ENCODE measurements at regions of chr15 and their contacts with region 1.

Region 1: DNA sequence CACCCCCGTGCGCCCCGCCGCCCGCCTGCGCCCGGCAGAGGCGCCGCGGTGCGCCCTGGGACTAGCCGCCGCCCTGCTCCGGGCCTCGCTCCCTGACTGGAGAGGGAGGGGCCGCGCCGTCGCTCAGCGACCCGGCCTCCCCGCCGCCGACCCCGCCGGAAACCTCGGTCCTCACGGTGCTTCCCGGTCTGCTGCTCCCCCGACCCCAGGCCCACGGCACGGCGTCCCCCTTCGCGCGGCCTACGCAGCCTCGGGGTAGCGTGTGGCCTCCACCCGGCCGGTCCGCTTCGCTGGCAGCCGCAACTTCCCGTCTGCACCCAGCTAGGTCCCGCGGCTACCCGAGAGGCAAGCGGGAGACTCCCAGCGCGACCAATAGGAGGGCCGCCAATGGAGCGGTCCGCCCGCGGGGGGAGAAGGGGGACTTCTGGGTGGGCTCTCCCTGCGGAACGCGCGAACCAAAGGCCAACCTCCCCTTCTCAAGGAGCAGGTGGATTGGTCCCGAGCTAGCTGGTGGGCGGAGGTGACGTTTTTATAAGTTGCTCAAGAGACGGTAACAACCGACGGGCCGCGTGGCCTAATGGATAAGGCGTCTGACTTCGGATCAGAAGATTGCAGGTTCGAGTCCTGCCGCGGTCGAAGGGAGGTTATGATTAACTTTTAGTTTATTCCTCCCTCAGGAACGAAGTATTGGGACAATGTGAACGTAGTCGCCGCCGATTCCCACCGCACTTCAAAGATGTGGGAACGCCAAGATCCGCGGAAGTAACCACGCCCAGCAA is at the start of gene POLG:
- DNase-seq: peak; percentile 99
- H3K4me3 ChIP-seq: peak within 1 kb of the TSS; percentile 96
- H3K4me3 Mint-ChIP-seq: peak within 1 kb of the TSS; percentile 85
- H3K27ac Mint-ChIP-seq: peak within 1 kb of the TSS; percentile 98
- H3K4me1 ChIP-seq: 0 out of 2 replicates have a peak, but pooled peaks cover 3% of the 10 kb centered on the region
- H3K4me1 Mint-ChIP-seq: peaks cover 23% of the 10 kb centered on the region
- H3K27me3 ChIP-seq: no peaks in the 10 kb centered on the region
- H3K27me3 Mint-ChIP-seq: peaks cover 3% of the 10 kb centered on the region
- CTCF ChIP-seq: no peak
- total RNA-seq, gene POLG: 63.1 and 64.1 TPM in 2 replicates

Region 2: GRCh38 chr15:89167267-89168176 is 167.2 kb before region 1 on chr15:
- CTCF ChIA-PET with region 1: no interaction called
- POLR2A ChIA-PET with region 1: no interaction called
- intact Hi-C with region 1: no loop called
- DNase-seq: no peak
- H3K4me3 ChIP-seq: no peak overlapping the region
- H3K4me3 Mint-ChIP-seq: no peak overlapping the region
- H3K27ac Mint-ChIP-seq: peak overlapping the region; percentile 53
- H3K4me1 ChIP-seq: peaks cover 32% of the 10 kb centered on the region
- H3K4me1 Mint-ChIP-seq: peaks cover 17% of the 10 kb centered on the region
- H3K27me3 ChIP-seq: no peaks in the 10 kb centered on the region
- H3K27me3 Mint-ChIP-seq: no peaks in the 10 kb centered on the region
- CTCF ChIP-seq: no peak

Region 3: GRCh38 chr15:89195836-89196235 is 138.9 kb before region 1 on chr15:
- CTCF ChIA-PET with region 1: no interaction called
- POLR2A ChIA-PET with region 1: interaction called, 12 read pairs
- intact Hi-C with region 1: no loop called
- DNase-seq: no peak
- H3K4me3 ChIP-seq: no peak overlapping the region
- H3K4me3 Mint-ChIP-seq: no peak overlapping the region
- H3K27ac Mint-ChIP-seq: no peak overlapping the region
- H3K4me1 ChIP-seq: no peaks in the 10 kb centered on the region
- H3K4me1 Mint-ChIP-seq: peaks cover 5% of the 10 kb centered on the region
- H3K27me3 ChIP-seq: no peaks in the 10 kb centered on the region
- H3K27me3 Mint-ChIP-seq: no peaks in the 10 kb centered on the region
- CTCF ChIP-seq: no peak

Region 4: DNA sequence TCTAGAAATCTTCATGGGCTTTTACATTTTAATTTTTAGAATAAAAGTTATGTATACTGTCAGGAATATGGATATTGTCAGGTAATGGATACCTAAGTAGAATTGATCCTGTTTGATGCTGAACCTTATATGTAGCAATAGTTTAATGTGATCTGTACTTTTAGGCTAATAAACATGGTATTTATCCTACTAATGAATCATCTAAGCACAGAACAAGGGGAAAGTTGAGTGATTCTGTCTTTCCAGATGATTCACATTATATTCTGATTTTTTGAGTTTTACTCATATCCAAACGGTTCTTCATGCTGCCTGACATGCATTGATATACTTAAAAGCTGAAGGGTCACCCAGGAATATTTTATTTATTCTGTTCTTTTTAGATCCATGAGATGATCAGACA is 56.4 kb before region 1 on chr15:
- CTCF ChIA-PET with region 1: no interaction called
- POLR2A ChIA-PET with region 1: no interaction called
- intact Hi-C with region 1: no loop called
- DNase-seq: no peak
- H3K4me3 ChIP-seq: no peak overlapping the region
- H3K4me3 Mint-ChIP-seq: no peak overlapping the region
- H3K27ac Mint-ChIP-seq: no peak overlapping the region
- H3K4me1 ChIP-seq: no peaks in the 10 kb centered on the region
- H3K4me1 Mint-ChIP-seq: no peaks in the 10 kb centered on the region
- H3K27me3 ChIP-seq: no peaks in the 10 kb centered on the region
- H3K27me3 Mint-ChIP-seq: no peaks in the 10 kb centered on the region
- CTCF ChIP-seq: no peak

Region 5: GRCh38 chr15:89364341-89364740 is 29.6 kb after region 1 on chr15:
- CTCF ChIA-PET with region 1: no interaction called
- POLR2A ChIA-PET with region 1: no interaction called
- intact Hi-C with region 1: no loop called
- DNase-seq: no peak
- H3K4me3 ChIP-seq: no peak overlapping the region
- H3K4me3 Mint-ChIP-seq: no peak overlapping the region
- H3K27ac Mint-ChIP-seq: no peak overlapping the region
- H3K4me1 ChIP-seq: no peaks in the 10 kb centered on the region
- H3K4me1 Mint-ChIP-seq: no peaks in the 10 kb centered on the region
- H3K27me3 ChIP-seq: peaks cover 6% of the 10 kb centered on the region
- H3K27me3 Mint-ChIP-seq: peaks cover 50% of the 10 kb centered on the region
- CTCF ChIP-seq: no peak

Region 6: DNA sequence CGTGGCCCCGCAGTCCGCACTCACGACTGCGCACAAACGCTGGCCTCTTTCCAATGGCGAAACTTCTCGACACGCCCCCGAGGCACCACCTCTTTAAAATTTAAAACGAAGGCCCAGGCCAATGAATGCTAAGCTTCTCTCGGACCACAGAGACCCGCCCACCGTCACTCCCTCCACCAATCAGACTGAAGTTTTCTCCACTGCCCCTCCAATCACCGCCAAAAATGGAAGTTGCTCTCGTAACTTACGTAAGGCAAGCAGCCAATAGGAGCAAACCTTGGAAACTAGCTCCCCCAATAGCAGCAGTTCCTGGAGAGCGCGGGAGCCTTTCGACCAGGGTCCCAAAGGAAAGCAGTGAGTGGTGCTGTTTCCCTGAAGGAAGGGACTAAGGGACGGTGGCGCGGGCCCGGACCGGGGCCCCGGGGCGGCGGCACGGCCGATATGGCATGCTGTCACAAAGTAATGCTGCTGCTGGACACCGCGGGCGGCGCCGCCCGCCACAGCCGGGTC is 240.5 kb after region 1 on chr15 and contains the start of gene TICRR:
- CTCF ChIA-PET with region 1: no interaction called
- POLR2A ChIA-PET with region 1: no interaction called
- intact Hi-C with region 1: loop called (anchors 1 kb)
- DNase-seq: peak; percentile 97 to 99
- H3K4me3 ChIP-seq: peak within 1 kb of the TSS; percentile 62
- H3K4me3 Mint-ChIP-seq: peak within 1 kb of the TSS; percentile 79
- H3K27ac Mint-ChIP-seq: peak within 1 kb of the TSS; percentile 77
- H3K4me1 ChIP-seq: peaks cover 7% of the 10 kb centered on the region; the same call in 1 of the 2 replicates
- H3K4me1 Mint-ChIP-seq: peaks cover 18% of the 10 kb centered on the region
- H3K27me3 ChIP-seq: no peaks in the 10 kb centered on the region
- H3K27me3 Mint-ChIP-seq: peaks cover 3% of the 10 kb centered on the region
- CTCF ChIP-seq: no peak
- total RNA-seq, gene TICRR: 23.6 and 24.1 TPM in 2 replicates

Measured in Caco-2 (cell line).